Esophagus squamous epithelium (tissue), 5 donors: ENCODE measurements at regions of chr1 and their contacts with region 1.

Region 1: GRCh38 chr1:109041621-109042468 is at the start of gene WDR47:
- DNase-seq: peak; percentile 81
- H3K4me3 ChIP-seq: peak within 1 kb of the TSS; percentile 91 to 99 (median 96)
- H3K27ac ChIP-seq: peak within 1 kb of the TSS; percentile 90 to 96 (median 94)
- H3K4me1 ChIP-seq: peaks cover 10 to 44% (median 14%) of the 10 kb centered on the region in 3 donors
- H3K27me3 ChIP-seq: no peaks in the 10 kb centered on the region
- CTCF ChIP-seq: peak in 1 of 6 experiments; percentile 16
- POLR2A ChIP-seq: peak in 3 of 4 donors; percentile 95 to 98 (median 97)
- total RNA-seq, gene WDR47: 13.3 to 22.7 (median 18.3) TPM

Region 2: DNA sequence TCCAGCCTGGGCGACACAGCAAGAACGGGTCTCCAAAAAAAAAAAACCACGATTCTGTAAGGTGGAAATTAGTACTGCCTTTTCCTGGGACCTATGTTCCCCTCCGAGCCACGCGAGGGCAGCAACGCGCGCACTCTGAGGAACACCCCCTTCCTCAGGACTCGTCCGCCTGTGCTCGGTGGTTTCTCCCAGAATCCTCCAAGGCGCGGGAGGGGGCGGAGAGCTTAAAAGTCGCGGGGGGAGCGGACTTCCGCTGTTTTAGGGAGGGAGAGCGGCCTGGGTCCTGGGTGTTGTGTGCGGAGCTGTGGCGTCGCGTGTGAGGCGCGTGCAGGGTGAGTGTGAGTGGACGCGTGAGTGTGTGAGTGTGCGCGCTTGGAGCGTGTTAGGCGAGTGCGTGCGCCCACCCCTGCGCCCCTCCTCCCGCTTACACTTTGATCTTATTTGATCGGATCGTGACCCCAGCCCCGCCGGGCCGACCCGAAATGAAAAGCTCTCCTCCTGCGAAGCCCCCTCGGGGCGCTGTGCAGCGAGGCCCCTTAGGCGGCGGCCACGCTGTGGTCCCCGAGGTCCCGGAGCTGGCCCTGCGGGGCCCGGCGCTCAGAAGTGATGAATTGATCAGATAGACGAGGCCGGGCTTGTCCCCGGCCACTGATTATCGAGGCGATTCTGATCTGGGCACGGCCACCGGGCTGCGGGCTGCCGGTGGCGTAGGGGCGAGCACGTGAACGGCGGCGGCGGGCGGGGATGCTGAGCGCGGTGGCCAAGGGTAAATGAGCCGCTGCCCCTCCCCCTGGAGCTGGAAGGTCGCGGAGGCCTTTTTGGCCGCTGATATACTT is 58.3 kb after region 1 on chr1:
- intact Hi-C with region 1: loop called (anchors 10 kb)
- DNase-seq: peak; percentile 92
- H3K4me3 ChIP-seq: peak overlapping the region; percentile 80 to 100 (median 96)
- H3K27ac ChIP-seq: peak overlapping the region; percentile 95 to 100 (median 98)
- H3K4me1 ChIP-seq: peaks cover 0 to 51% (median 14%) of the 10 kb centered on the region in 3 donors
- H3K27me3 ChIP-seq: no peaks in the 10 kb centered on the region
- CTCF ChIP-seq: peak; percentile 74 to 91 (median 84)
- POLR2A ChIP-seq: peak in 3 of 4 donors; percentile 96 to 98 (median 97)

Region 3: GRCh38 chr1:109161858-109162606 is 120.2 kb after region 1 on chr1:
- intact Hi-C with region 1: no loop called
- DNase-seq: no peak
- H3K4me3 ChIP-seq: peak overlapping the region in 1 of 4 donors; percentile 15
- H3K27ac ChIP-seq: peak overlapping the region in 3 of 4 donors; percentile 32 to 73 (median 53)
- H3K4me1 ChIP-seq: peaks cover 13 to 18% (median 13%) of the 10 kb centered on the region in 3 donors
- H3K27me3 ChIP-seq: no peaks in the 10 kb centered on the region
- CTCF ChIP-seq: no peak
- POLR2A ChIP-seq: no peak